CD4-positive, alpha-beta memory T cell (primary cell): ENCODE measurements at regions of chr4 and their contacts with region 1.

Region 1: DNA sequence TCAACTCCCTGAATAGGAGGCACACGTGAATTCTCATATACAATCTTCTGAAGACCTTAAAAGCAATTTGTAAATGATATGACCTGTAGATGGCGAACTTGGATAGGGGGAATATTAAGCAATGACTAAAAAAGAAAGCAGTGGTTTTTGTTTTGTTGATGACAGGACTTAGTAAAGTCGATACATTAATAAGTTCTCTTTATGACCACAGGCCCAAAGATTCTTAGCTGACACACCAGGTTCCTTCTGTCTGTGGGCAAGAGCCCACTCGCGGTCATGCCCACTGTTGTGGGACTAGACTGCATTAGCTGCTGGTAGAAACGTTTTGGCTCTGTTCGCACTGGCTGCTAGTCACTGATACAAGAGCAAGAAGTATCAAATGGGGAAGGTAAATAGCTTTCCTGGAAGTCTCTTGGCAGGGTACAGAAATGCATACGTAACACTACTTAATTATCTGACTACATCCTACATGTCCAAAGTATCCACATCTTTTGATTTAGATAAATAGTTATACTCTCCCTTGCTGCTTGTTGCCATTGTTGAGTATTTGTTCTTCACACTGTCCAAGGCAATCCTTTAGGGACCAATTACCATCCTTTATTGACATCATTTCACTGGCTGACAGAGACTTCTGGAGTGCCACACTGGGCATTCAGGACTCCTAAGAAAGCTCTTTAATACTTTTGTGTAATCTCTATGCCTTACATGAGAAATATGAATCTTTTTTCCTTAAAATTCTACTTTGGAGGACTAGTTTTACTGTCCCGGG is 31.0 kb downstream of the ALPK1 start:
- DNase-seq: peak in 4 of 5 donors; percentile 38 to 50 (median 45)
- H3K4me3 ChIP-seq: no peak overlapping the region
- H3K4me3 Mint-ChIP-seq: peak overlapping the region in 5 of 8 donors; percentile 0 to 60 (median 37)
- H3K27ac ChIP-seq: no peak overlapping the region
- H3K27ac Mint-ChIP-seq: peak overlapping the region in 1 of 7 donors; percentile 49
- H3K4me1 ChIP-seq: no peaks in the 10 kb centered on the region
- H3K4me1 Mint-ChIP-seq: peaks cover under 1 to 8% (median 6%) of the 10 kb centered on the region in 4 donors
- H3K27me3 ChIP-seq: no peaks in the 10 kb centered on the region
- H3K27me3 Mint-ChIP-seq: no peaks in the 10 kb centered on the region

Region 2: DNA sequence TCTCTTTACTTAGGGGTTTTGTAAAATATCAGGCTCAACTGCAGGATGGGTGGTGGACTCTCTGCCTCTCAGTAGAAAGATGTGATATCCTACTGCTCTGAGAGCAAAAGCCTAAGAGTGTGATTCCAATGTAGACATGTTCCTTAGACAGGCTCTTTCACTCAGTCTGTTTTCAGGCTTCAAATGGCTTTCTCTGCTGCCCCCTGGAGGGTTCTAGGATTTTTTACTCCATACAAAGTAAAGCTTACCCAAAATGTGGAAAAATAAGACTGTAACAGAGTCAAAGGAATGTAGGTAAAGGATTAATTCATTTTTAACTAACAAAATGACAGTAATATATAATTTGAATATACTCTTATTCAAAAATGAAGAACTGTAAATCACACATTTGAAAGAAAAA is 276.4 kb after region 1 on chr4:
- CTCF ChIA-PET with region 1: interaction called, 26 read pairs
- POLR2A ChIA-PET with region 1: no interaction called
- intact Hi-C with region 1: loop called (anchors 1 kb)
- DNase-seq: peak in 4 of 5 donors; percentile 32 to 42 (median 36)
- H3K4me3 ChIP-seq: no peak overlapping the region
- H3K4me3 Mint-ChIP-seq: no peak overlapping the region
- H3K27ac ChIP-seq: no peak overlapping the region
- H3K27ac Mint-ChIP-seq: peak overlapping the region in 2 of 7 donors; percentile 23 to 42
- H3K4me1 ChIP-seq: no peaks in the 10 kb centered on the region
- H3K4me1 Mint-ChIP-seq: peaks cover 0 to 2% (median under 1%) of the 10 kb centered on the region in 4 donors
- H3K27me3 ChIP-seq: no peaks in the 10 kb centered on the region
- H3K27me3 Mint-ChIP-seq: no peaks in the 10 kb centered on the region

Region 3: DNA sequence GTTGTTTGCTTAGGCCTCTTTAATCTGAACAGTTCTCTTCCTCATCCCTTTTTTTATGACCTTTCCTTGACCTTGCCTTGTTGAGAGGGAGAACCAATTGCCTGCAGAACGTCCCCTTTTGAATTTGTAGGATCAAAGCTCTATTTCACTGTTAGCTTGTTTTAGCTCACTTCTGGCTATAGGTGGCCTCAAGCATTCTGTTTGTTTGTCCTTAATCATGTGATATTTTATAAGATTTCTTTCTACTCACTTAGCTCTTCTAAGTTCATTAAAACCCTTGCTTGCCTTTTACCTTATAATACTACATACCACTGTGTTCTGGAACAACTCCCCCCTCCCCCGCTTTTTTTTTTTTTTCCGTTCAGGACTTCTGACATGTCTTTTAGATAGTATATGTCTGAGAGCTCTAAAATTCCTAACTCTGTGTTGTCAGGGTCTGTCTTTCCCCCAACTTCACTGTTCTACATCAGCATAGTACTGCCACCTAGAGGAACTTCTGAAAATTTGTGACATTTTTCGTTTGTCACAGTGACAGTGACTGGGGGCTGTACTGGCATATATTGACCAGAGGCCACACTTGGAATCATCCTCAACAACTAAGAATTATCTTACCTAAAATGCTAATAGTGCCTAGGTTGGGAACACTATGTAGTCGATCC is 437.3 kb after region 1 on chr4:
- CTCF ChIA-PET with region 1: interaction called, 15 read pairs
- POLR2A ChIA-PET with region 1: no interaction called
- intact Hi-C with region 1: no loop called
- DNase-seq: no peak
- H3K4me3 ChIP-seq: no peak overlapping the region
- H3K4me3 Mint-ChIP-seq: no peak overlapping the region
- H3K27ac ChIP-seq: no peak overlapping the region
- H3K27ac Mint-ChIP-seq: no peak overlapping the region
- H3K4me1 ChIP-seq: no peaks in the 10 kb centered on the region
- H3K4me1 Mint-ChIP-seq: peaks cover 0 to 2% (median under 1%) of the 10 kb centered on the region in 4 donors
- H3K27me3 ChIP-seq: no peaks in the 10 kb centered on the region
- H3K27me3 Mint-ChIP-seq: peaks cover 0 to 1% of the 10 kb centered on the region in 2 donors